ENCODE measurements at regions of chr10 and their contacts with region 1.

Region 1: DNA sequence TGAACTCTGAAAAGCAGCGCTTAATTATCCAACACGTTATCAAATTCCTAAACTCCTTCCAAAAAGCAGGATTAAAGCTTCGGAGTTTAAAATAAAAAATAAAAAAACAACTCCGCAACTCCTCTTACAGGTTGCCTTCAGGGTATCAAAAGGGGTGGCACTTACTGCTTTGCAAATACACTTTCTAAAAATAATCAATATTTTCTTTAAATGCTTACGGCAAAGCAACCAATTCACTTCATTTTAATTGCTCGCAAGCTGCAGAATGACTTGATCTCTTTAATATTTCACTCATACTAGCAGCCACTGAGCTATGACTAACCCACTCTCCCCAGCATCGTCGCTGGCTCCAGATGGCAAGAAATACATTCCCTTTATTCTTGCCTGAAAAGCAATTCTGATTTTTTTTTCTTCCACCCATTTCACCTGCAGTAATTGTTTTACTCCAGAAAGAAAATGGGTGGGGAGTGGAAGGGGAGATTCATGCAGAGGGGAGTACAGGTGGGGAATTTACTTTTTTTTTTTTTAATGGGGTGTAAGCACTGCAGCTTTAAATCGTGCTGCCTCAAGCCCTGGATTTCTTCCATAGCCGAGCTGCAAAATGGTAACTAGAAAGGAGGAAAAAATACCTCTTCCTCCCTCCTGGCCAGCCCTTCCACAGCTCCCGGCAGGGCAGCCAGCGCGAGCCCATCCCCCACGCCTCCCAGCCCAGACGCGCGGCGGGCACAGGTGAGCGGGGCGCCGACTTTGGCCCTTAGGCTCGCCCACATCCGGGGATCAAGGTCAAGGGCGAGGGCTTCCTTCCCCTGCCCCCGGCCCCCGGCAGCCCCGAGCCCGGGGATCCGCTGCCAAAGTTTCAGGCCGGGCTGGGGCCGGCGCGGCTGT is 54.2 kb upstream of the FHIP2A start:
- DNase-seq: no peak
- H3K4me3 ChIP-seq: peak overlapping the region; percentile 63
- CTCF ChIP-seq: no peak

Region 2: GRCh38 chr10:114779803-114780609 is 12.7 kb after region 1 on chr10:
- CTCF ChIA-PET with region 1: interaction called, 14 read pairs
- POLR2A ChIA-PET with region 1: no interaction called
- DNase-seq: peak; percentile 67
- H3K4me3 ChIP-seq: no peak overlapping the region
- CTCF ChIP-seq: no peak